A549 (cell line): ENCODE measurements at regions of chr6 and their contacts with region 1.

Region 1: DNA sequence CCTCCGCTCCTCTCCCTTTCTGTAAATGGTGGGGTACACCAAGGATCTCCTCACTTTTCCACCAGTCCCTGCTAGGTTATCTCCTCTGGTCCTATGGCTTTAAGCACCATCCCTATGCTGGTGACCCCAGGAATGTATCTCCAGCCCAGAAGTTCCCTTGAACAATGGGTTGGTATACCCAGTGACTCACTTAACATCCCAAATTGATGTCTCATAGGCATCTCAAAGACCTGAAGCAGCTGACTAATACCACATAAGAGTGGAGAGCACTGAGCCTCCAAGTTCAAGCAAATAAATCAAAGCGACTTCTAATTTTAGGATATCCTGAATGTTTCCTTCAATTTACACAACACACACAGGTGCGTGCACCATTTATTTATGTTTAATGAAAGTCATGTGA is 48.3 kb downstream of the ADGRF1 start:
- DNase-seq: peak; percentile 58 to 61
- ATAC-seq: peak; percentile 93 to 96
- H3K4me3 ChIP-seq: no peak overlapping the region
- H3K27ac ChIP-seq: peak overlapping the region in 1 of 2 experiments; percentile 45; a peak in 2 of 6 replicates
- H3K4me1 ChIP-seq: peaks cover 12% of the 10 kb centered on the region; the same call in 2 of the 3 replicates
- CTCF ChIP-seq: no peak
- EP300 ChIP-seq: no peak
- POLR2A ChIP-seq: no peak
- RAD21 ChIP-seq: no peak

Region 2: GRCh38 chr6:47042275-47042791 is 48.5 kb after region 1 on chr6 and contains the start of gene ADGRF1:
- CTCF ChIA-PET with region 1: interaction called, 13 read pairs
- POLR2A ChIA-PET with region 1: no interaction called
- DNase-seq: no peak
- ATAC-seq: no peak
- H3K4me3 ChIP-seq: no peak within 1 kb of the TSS
- H3K27ac ChIP-seq: no peak within 1 kb of the TSS
- H3K4me1 ChIP-seq: peaks cover 14% of the 10 kb centered on the region
- CTCF ChIP-seq: no peak
- EP300 ChIP-seq: no peak
- POLR2A ChIP-seq: no peak
- RAD21 ChIP-seq: no peak
- polyA plus RNA-seq, gene ADGRF1: 0.01 TPM in 1 of 2 replicates, not detected in the other

Region 3: GRCh38 chr6:47047479-47048407 is 53.9 kb after region 1 on chr6:
- CTCF ChIA-PET with region 1: interaction called, 13 read pairs
- POLR2A ChIA-PET with region 1: no interaction called
- DNase-seq: peak; percentile 17 to 83
- ATAC-seq: peak; percentile 96
- H3K4me3 ChIP-seq: no peak overlapping the region
- H3K27ac ChIP-seq: peak overlapping the region; percentile 45 to 51; a peak in 4 of 6 replicates
- H3K4me1 ChIP-seq: peaks cover 15% of the 10 kb centered on the region
- CTCF ChIP-seq: peak; percentile 76
- EP300 ChIP-seq: no peak
- POLR2A ChIP-seq: no peak
- RAD21 ChIP-seq: peak; percentile 82 to 85